Calu3 (cell line): ENCODE measurements at regions of chr12 and their contacts with region 1.

Region 1: GRCh38 chr12:90940872-90941499 is 14.0 kb downstream of the CCER1 start:
- DNase-seq: no peak
- H3K4me3 Mint-ChIP-seq: no peak overlapping the region
- H3K27ac Mint-ChIP-seq: no peak overlapping the region
- H3K4me1 Mint-ChIP-seq: peaks cover 25% of the 10 kb centered on the region
- H3K27me3 Mint-ChIP-seq: no peaks in the 10 kb centered on the region
- CTCF ChIP-seq: peak; percentile 79

Region 2: GRCh38 chr12:89019408-89020120 is 1921.4 kb before region 1 on chr12:
- CTCF ChIA-PET with region 1: no interaction called
- intact Hi-C with region 1: loop called (anchors 10 kb)
- DNase-seq: peak; percentile 82
- H3K4me3 Mint-ChIP-seq: no peak overlapping the region
- H3K27ac Mint-ChIP-seq: no peak overlapping the region
- H3K4me1 Mint-ChIP-seq: peaks cover 21% of the 10 kb centered on the region
- H3K27me3 Mint-ChIP-seq: no peaks in the 10 kb centered on the region
- CTCF ChIP-seq: peak; percentile 91

Region 3: DNA sequence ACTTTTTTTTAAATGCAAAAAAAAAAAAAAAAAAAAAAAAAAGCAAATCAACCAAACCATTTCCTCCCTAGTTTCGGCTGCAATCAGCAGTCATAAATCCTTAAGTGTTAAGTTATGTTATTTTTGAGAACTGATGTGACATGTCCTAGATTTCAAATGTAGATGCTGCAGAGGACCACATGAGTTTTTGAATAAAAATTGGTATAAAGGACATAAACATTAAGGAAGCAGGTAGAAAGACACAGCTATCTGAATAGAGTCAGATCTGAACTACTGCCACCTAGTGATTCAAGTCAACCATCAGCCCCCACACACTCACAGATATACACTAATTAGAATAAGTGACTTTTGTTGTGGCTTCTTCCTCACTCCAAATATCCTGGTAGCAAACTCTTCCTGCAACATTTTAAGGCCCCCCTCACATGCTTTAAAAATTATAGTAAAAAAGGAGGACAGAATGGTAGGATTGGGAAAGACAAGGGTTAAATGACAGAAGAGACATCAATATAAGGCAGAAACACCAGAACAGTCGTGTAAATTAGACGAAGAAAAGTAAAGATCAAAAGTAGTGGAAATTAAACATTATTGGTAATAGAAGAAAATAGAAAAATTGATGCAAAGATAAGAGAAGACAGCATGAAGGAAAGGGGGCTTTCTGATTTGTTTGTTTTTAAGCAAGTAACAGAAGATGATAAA is 837.9 kb before region 1 on chr12:
- CTCF ChIA-PET with region 1: no interaction called
- intact Hi-C with region 1: loop called (anchors 5 kb)
- DNase-seq: peak; percentile 12
- H3K4me3 Mint-ChIP-seq: no peak overlapping the region
- H3K27ac Mint-ChIP-seq: no peak overlapping the region
- H3K4me1 Mint-ChIP-seq: peaks cover 40% of the 10 kb centered on the region
- H3K27me3 Mint-ChIP-seq: no peaks in the 10 kb centered on the region
- CTCF ChIP-seq: peak; percentile 41

Region 4: GRCh38 chr12:90695415-90695814 is 245.6 kb before region 1 on chr12:
- CTCF ChIA-PET with region 1: no interaction called
- intact Hi-C with region 1: loop called (anchors 2 kb)
- DNase-seq: no peak
- H3K4me3 Mint-ChIP-seq: no peak overlapping the region
- H3K27ac Mint-ChIP-seq: no peak overlapping the region
- H3K4me1 Mint-ChIP-seq: no peaks in the 10 kb centered on the region
- H3K27me3 Mint-ChIP-seq: no peaks in the 10 kb centered on the region
- CTCF ChIP-seq: no peak

Region 5: DNA sequence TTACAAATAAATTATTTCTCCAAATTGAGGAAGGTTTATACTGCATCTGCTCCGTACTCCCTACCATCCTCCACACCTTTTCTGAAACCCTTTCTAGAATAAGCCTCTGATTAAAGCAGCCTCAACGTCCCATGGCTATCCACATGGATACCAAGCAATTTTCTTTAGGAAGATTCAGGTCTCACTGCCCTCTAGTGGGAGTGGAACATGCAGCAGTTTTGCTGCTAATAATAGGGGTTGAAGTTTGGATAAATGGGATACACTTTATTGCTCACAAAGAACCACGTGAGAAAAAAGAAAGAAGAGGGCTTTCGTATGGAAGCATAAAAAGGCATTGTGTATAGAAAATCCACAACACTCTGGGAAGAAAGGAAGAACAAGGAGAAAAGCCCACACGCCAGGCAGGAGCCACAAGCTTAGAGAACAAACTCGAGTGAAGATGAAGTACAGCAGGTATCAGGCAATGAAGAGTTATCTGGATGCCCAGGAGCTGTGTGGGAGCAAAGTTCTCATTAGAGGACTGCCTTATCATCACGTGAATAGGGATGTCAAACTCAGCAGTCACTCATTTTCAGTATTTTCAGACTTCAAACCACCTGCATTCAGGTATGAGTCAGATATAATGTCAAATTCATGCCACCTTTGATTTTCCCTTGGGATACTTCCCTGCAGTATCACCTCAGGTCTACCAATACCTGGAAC is 31.8 kb before region 1 on chr12:
- CTCF ChIA-PET with region 1: interaction called, 4 read pairs
- intact Hi-C with region 1: loop called (anchors 1 kb)
- DNase-seq: peak; percentile 48
- H3K4me3 Mint-ChIP-seq: no peak overlapping the region
- H3K27ac Mint-ChIP-seq: no peak overlapping the region
- H3K4me1 Mint-ChIP-seq: no peaks in the 10 kb centered on the region
- H3K27me3 Mint-ChIP-seq: no peaks in the 10 kb centered on the region
- CTCF ChIP-seq: peak; percentile 63

Region 6: DNA sequence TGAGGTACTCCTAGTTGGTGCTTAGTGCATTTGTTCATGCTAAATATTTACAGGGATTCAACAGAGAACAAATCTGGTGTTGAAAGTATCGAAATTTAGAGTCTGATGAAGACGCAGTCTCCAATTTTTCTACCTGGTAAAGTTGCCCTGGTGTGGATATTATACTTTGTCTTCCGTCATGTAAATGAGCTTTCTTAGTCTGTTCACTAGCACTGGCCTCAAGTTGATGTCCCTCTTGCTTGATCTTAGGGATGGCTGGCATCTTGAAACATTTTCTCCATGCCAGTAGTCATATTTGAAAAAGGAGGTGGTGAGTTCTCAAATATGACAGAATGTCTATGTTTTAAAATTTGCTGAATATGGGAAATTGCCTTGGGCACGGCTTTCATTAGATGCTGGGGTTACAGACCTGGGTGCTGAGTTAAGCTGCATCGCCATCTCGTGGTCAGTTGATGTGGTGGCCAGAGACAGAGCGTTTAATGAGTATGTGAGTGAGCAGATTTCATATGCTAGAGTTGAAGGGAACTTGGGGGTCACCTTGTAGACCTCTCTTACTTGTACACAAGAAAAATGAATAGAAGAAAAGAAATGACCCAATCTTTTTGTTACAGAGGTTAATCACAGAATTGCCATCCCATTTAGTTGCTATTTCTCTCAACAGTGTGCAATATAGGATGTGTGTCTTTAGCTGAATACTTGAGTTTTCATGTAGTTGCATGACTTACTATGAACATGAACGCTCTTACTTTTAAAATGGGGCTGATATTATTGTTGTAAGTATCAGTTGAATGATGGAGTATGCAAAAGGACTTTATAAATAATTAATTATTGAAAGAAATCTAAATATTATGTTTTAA is 414.4 kb after region 1 on chr12:
- CTCF ChIA-PET with region 1: interaction called, 13 read pairs
- intact Hi-C with region 1: loop called (anchors 1 kb)
- DNase-seq: peak; percentile 73
- H3K4me3 Mint-ChIP-seq: no peak overlapping the region
- H3K27ac Mint-ChIP-seq: no peak overlapping the region
- H3K4me1 Mint-ChIP-seq: peaks cover 27% of the 10 kb centered on the region
- H3K27me3 Mint-ChIP-seq: no peaks in the 10 kb centered on the region
- CTCF ChIP-seq: peak; percentile 74